Psoas muscle (tissue), 8 donors: ENCODE measurements at regions of chr22 and their contacts with region 1.

Region 1: GRCh38 chr22:21712894-21713712 is 22.5 kb downstream of the YPEL1 start:
- DNase-seq: peak; percentile 58 to 72
- ATAC-seq: peak; percentile 58 to 86 (median 78)
- H3K4me3 ChIP-seq: no peak overlapping the region
- H3K27ac ChIP-seq: peak overlapping the region; percentile 83
- H3K4me1 ChIP-seq: peaks cover 40% of the 10 kb centered on the region
- H3K27me3 ChIP-seq: no peaks in the 10 kb centered on the region
- CTCF ChIP-seq: peak; percentile 74

Region 2: GRCh38 chr22:20940186-20940651 is 772.9 kb before region 1 on chr22:
- intact Hi-C with region 1: no loop called
- DNase-seq: no peak
- ATAC-seq: peak in 2 of 4 donors; percentile 34 to 58
- H3K4me3 ChIP-seq: no peak overlapping the region
- H3K27ac ChIP-seq: peak overlapping the region; percentile 4
- H3K4me1 ChIP-seq: peaks cover 44% of the 10 kb centered on the region
- H3K27me3 ChIP-seq: no peaks in the 10 kb centered on the region
- CTCF ChIP-seq: no peak

Region 3: DNA sequence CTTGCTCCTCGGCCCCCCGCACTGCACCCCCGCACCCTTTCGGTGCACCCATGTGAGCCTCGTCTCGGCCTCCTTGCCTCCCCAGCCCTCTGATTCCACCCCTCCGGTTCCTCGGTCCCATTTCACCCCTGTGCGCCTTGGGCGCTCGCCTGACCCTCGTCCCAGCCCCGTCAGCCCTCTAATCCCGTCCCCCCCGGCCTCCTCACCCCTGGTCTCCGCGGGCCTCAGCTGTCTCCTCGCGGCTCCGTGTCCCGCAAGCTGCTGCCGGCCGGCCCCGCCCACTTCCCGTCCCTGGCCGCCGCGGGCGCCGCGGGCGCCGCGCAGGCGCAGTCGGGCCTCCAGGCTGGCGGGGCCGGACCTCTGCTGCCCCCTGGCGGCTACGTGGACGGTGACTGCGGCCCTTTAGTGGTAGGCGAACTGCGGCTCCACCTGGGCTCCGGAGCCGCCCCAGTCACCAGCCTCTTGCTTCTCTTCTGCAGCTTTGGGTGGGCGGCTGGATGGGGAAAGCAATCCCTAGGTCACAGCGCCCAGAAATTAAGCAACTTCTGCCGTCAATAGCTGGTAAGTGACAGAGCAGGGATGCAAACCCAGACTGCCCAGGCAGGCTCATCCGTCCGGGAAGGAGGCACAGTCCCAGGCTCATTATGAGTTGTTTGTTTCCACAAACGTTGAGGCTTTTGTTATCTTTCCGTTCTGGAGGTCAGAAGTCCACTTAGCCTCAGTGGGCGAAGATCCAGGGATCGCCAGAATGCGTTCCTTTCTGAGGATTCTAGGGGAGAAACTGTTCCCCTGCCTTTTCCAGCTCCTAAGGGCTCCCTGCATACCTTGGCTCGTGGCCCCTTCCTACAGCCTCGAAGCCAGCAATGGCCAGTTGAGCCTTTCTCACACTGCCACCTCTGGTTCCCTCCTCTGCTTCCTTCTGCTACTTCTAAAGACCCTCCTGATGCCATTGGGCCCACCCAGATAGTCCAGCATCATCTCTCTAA is 239.8 kb after region 1 on chr22 and contains the start of gene PPM1F:
- intact Hi-C with region 1: loop called (anchors 2 to 5 kb)
- DNase-seq: peak; percentile 88 to 93
- ATAC-seq: peak; percentile 88 to 94 (median 92)
- H3K4me3 ChIP-seq: peak within 1 kb of the TSS; percentile 74
- H3K27ac ChIP-seq: peak within 1 kb of the TSS; percentile 76
- H3K4me1 ChIP-seq: peaks cover 26% of the 10 kb centered on the region
- H3K27me3 ChIP-seq: no peaks in the 10 kb centered on the region
- CTCF ChIP-seq: peak; percentile 92
- total RNA-seq, gene PPM1F: 11.9 to 29.5 (median 15.7) TPM